ENCODE measurements at regions of chr4 and their contacts with region 1.

Region 1: DNA sequence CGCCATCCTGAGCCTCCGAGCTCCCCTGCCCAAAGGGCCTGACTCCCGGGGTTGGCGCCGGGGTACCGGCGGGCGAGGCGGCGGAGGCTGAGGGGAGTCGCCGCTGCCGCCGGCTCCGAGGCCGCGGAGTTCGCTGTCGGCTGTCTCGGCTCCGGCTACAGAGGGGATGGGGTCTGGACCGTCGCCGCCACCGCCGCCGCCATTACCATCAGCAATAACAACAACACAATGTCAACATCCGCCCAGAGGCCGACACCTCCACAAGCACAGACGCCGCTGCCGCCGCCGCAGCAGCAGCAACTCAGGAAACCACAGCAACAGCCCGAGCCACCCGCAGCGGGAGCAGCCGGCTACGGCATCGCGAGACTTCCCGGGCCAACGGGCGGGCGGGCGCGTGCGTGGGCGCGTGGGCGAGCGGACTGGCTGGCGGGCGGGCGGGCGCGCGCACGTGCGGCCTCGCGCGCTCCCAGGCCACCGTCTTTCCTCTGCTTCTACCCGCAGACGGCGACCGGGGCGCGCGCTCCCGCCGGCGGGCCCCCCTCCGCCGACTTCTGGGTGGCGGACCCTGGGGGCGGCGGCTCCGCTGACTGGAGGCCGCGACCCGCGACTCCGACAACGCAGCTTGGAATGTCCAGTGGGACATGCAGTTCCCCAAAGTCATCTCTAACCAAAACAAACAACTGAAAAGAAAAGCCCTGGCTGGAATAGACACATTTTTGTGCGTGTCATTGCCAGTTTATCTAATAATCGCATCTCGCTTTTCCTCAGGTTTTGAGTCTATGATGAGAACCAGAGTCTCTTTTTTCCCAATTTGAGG is at the start of gene CHIC2:
- DNase-seq: peak; percentile 98
- total RNA-seq, gene CHIC2: 12.4 TPM

Region 2: GRCh38 chr4:53734584-53735353 is 329.7 kb before region 1 on chr4:
- intact Hi-C with region 1: no loop called
- DNase-seq: no peak

Region 3: DNA sequence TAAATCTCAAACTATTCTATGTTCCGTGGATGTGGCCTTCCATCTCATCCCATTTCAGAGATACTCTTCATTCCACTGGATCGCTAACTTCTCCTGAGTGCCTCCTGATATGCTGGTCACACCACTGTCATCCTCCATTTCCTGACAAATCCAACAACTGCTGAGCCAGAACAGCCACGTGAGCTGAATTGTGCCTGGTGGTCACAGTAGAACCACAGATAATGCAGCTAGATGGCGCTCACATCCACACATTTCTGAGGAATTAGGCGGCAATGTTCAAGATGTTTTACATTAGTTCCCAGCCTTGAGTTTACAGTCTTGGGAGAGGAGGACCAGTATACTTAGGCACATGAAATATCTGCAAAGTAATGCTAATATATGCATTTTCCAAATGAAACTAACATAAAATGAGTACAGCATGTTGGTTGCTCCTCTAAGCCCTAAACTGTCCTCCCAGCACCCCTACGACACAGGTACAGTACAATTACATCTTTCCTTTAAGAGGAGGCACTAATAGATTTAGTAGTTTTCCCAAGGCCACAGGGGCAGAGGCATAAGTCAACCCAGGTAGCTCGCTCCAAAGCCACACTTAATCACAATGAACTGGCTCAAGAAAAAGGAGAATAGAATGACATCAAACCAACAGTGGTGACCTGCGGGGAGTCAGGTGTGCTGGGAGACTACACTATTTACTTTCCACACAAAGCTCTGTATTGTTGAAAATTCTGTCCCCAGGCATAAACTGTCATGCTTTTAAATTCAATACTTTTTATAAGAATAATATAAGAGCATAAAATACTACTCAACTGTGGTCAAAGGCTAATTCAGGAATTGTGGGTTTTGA is 134.3 kb before region 1 on chr4:
- intact Hi-C with region 1: loop called (anchors 5 kb)
- DNase-seq: peak; percentile 82

Region 4: DNA sequence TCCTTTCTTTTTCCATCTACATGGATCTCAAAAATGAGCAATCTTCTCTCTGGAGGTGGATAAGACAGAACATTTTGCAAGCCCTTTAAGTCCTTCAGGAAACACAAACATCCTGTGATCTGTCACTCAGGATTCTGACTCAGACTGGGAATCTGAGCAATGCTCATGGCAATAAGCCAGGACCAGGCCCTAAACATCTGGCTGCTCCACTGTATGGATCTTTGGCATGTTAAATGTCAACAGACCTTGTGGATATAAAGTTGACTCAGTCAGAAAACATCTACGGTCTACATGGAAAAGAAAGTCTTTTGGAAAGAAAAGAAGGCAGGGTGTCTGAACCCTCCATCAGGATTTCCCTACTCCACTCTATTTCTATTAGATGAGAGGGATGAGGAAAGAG is 17.7 kb after region 1 on chr4:
- intact Hi-C with region 1: loop called (anchors 2 kb)
- DNase-seq: no peak

Region 5: GRCh38 chr4:54120518-54120917 is 56.0 kb after region 1 on chr4:
- intact Hi-C with region 1: loop called (anchors 2 kb)
- DNase-seq: no peak

Measured in cardiac septum (tissue), 1 donor.